ENCODE measurements at regions of chr2 and their contacts with region 1.

Region 1: GRCh38 chr2:43226558-43226954 is at the start of gene ZFP36L2:
- DNase-seq: peak; percentile 90 to 99 (median 97)
- ATAC-seq: peak; percentile 84
- H3K4me3 ChIP-seq: peak within 1 kb of the TSS; percentile 87
- H3K4me3 Mint-ChIP-seq: peak within 1 kb of the TSS; percentile 85 to 99 (median 96)
- H3K27ac ChIP-seq: peak within 1 kb of the TSS; percentile 97
- H3K27ac Mint-ChIP-seq: peak within 1 kb of the TSS; percentile 87 to 99 (median 96)
- H3K4me1 ChIP-seq: peaks cover 22% of the 10 kb centered on the region in 2 donors
- H3K4me1 Mint-ChIP-seq: peaks cover 22 to 35% (median 25%) of the 10 kb centered on the region in 7 donors
- H3K27me3 ChIP-seq: no peaks in the 10 kb centered on the region
- H3K27me3 Mint-ChIP-seq: peaks cover 0 to 4% (median 0%) of the 10 kb centered on the region in 5 donors
- total RNA-seq, gene ZFP36L2: 231 to 747 (median 389) TPM

Region 2: DNA sequence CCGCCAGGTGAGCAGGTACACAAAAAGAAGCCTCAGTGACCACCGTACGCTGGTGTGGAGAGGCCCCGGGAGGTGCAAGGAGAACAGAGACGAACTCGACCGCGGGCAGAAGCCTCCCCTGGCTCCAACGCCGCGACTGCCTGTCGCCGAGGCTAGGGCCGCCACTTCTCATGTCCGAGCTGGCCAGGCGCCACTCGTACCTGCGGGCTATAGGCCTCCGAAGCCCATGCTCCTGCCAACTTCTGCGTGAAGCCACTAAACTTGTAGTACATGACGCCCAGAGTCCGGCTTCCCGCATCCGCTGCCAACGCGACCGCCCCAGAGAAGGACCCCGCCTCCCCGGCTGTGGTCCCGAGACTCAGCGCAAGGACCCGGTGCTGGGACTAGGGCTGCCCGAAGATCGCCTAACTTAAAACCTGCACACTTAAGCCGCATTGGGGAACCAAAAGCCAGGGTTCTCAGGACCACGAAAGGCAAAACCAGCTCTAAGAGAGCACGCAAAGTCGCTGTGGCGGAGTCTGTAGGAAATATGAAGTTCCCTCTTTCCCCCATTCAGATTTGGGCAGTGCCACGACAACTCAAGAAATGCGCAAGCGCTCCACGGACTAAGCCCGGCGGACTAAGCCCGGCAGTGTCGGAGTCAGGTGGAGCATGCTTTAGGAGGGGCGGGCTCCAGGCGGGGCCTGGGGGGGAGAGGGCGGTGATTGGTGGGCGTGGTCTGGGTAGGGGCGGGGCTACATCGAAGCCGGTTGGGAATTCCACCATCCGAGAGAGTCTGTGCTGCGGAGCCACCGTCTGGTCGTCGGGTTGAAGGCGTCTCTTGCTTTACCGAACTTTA is 865.4 kb before region 1 on chr2 and contains the start of gene COX7A2L:
- CTCF ChIA-PET with region 1: no interaction called
- POLR2A ChIA-PET with region 1: no interaction called
- intact Hi-C with region 1: loop called (anchors 5 to 10 kb)
- DNase-seq: peak; percentile 88 to 97 (median 96)
- ATAC-seq: peak; percentile 98
- H3K4me3 ChIP-seq: peak within 1 kb of the TSS; percentile 82
- H3K4me3 Mint-ChIP-seq: peak within 1 kb of the TSS; percentile 87 to 98 (median 95)
- H3K27ac ChIP-seq: peak within 1 kb of the TSS; percentile 92
- H3K27ac Mint-ChIP-seq: peak within 1 kb of the TSS; percentile 90 to 100 (median 98)
- H3K4me1 ChIP-seq: peaks cover 23 to 24% of the 10 kb centered on the region in 2 donors
- H3K4me1 Mint-ChIP-seq: peaks cover 33 to 56% (median 51%) of the 10 kb centered on the region in 7 donors
- H3K27me3 ChIP-seq: no peaks in the 10 kb centered on the region
- H3K27me3 Mint-ChIP-seq: no peaks in the 10 kb centered on the region
- total RNA-seq, gene COX7A2L: 57.3 to 87.7 (median 81.5) TPM

Region 3: GRCh38 chr2:42859006-42859552 is 367.5 kb before region 1 on chr2:
- CTCF ChIA-PET with region 1: no interaction called
- POLR2A ChIA-PET with region 1: no interaction called
- intact Hi-C with region 1: loop called (anchors 2 to 10 kb)
- DNase-seq: peak; percentile 15 to 75 (median 58)
- ATAC-seq: peak; percentile 72
- H3K4me3 ChIP-seq: no peak overlapping the region
- H3K4me3 Mint-ChIP-seq: no peak overlapping the region
- H3K27ac ChIP-seq: no peak overlapping the region
- H3K27ac Mint-ChIP-seq: no peak overlapping the region
- H3K4me1 ChIP-seq: no peaks in the 10 kb centered on the region
- H3K4me1 Mint-ChIP-seq: peaks cover 0 to 4% (median 0%) of the 10 kb centered on the region in 7 donors
- H3K27me3 ChIP-seq: no peaks in the 10 kb centered on the region
- H3K27me3 Mint-ChIP-seq: peaks cover 0 to 3% (median 0%) of the 10 kb centered on the region in 5 donors

Region 4: GRCh38 chr2:43059183-43059897 is 167.2 kb before region 1 on chr2:
- CTCF ChIA-PET with region 1: interaction called, 3 read pairs
- POLR2A ChIA-PET with region 1: interaction called, 5 read pairs
- intact Hi-C with region 1: loop called in 1 of 2 experiments (anchors 1 kb)
- DNase-seq: peak in 8 of 9 donors; percentile 49 to 79 (median 70)
- ATAC-seq: peak; percentile 88
- H3K4me3 ChIP-seq: peak overlapping the region; percentile 17
- H3K4me3 Mint-ChIP-seq: peak overlapping the region; percentile 46 to 80 (median 66)
- H3K27ac ChIP-seq: peak overlapping the region; percentile 52
- H3K27ac Mint-ChIP-seq: peak overlapping the region; percentile 79 to 95 (median 89)
- H3K4me1 ChIP-seq: peaks cover 26 to 27% of the 10 kb centered on the region in 2 donors
- H3K4me1 Mint-ChIP-seq: peaks cover 25 to 54% (median 47%) of the 10 kb centered on the region in 7 donors
- H3K27me3 ChIP-seq: no peaks in the 10 kb centered on the region
- H3K27me3 Mint-ChIP-seq: peaks cover 0 to 3% (median 0%) of the 10 kb centered on the region in 5 donors

Region 5: DNA sequence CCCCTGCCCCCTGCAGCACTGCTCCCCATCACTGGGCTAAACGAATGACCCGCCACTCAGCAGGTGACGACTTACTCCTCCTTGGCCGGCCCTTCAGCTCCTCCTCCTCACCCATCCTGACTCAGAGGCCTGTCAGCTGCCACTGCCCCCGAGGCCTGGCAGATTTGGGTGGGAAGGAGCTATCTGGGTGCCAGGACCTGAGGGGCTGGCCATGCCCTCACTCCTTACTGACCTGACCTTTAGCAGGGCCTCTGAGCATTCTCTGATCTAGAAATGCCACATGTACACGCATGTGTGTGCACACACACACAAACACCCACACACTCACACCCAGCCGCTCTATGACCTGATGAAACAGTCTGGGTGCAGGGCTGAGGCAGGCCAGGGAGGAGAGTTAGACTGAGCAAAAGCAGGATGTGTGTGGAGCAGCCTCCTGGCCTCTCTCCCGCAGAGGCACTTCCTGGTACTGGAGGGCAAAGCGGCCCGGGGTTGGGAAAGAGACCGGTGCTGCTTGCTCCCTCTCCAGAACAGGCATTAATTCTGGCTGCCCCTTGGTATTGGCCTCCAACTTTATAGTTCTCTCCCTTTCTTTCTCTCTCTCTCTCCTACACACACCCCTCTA is 68.2 kb before region 1 on chr2:
- CTCF ChIA-PET with region 1: interaction called, 4 read pairs
- POLR2A ChIA-PET with region 1: interaction called, 1,899 read pairs
- intact Hi-C with region 1: loop called (anchors 1 kb)
- DNase-seq: peak in 3 of 9 donors; percentile 70 to 72 (median 71)
- ATAC-seq: peak; percentile 59
- H3K4me3 ChIP-seq: peak overlapping the region; percentile 18
- H3K4me3 Mint-ChIP-seq: peak overlapping the region; percentile 81 to 91 (median 86)
- H3K27ac ChIP-seq: peak overlapping the region; percentile 92
- H3K27ac Mint-ChIP-seq: peak overlapping the region; percentile 96 to 100 (median 99)
- H3K4me1 ChIP-seq: peaks cover 53 to 62% of the 10 kb centered on the region in 2 donors
- H3K4me1 Mint-ChIP-seq: peaks cover 47 to 95% (median 69%) of the 10 kb centered on the region in 7 donors
- H3K27me3 ChIP-seq: no peaks in the 10 kb centered on the region
- H3K27me3 Mint-ChIP-seq: no peaks in the 10 kb centered on the region

Region 6: GRCh38 chr2:43426305-43427031 is 199.9 kb after region 1 on chr2:
- CTCF ChIA-PET with region 1: no interaction called
- POLR2A ChIA-PET with region 1: no interaction called
- intact Hi-C with region 1: loop called in 1 of 2 experiments (anchors 1 kb)
- DNase-seq: peak in 5 of 9 donors; percentile 4 to 56 (median 17)
- ATAC-seq: peak; percentile 94
- H3K4me3 ChIP-seq: no peak overlapping the region
- H3K4me3 Mint-ChIP-seq: peak overlapping the region in 4 of 10 donors; percentile 3 to 66 (median 5)
- H3K27ac ChIP-seq: no peak overlapping the region
- H3K27ac Mint-ChIP-seq: peak overlapping the region in 5 of 9 donors; percentile 0 to 89 (median 85)
- H3K4me1 ChIP-seq: peaks cover 0 to 35% of the 10 kb centered on the region in 2 donors
- H3K4me1 Mint-ChIP-seq: peaks cover 8 to 43% (median 30%) of the 10 kb centered on the region in 7 donors
- H3K27me3 ChIP-seq: no peaks in the 10 kb centered on the region
- H3K27me3 Mint-ChIP-seq: peaks cover 0 to 6% (median 0%) of the 10 kb centered on the region in 5 donors